Head of caudate nucleus (tissue), 42 donors: ENCODE measurements at regions of chr6 and their contacts with region 1.

Region 1: DNA sequence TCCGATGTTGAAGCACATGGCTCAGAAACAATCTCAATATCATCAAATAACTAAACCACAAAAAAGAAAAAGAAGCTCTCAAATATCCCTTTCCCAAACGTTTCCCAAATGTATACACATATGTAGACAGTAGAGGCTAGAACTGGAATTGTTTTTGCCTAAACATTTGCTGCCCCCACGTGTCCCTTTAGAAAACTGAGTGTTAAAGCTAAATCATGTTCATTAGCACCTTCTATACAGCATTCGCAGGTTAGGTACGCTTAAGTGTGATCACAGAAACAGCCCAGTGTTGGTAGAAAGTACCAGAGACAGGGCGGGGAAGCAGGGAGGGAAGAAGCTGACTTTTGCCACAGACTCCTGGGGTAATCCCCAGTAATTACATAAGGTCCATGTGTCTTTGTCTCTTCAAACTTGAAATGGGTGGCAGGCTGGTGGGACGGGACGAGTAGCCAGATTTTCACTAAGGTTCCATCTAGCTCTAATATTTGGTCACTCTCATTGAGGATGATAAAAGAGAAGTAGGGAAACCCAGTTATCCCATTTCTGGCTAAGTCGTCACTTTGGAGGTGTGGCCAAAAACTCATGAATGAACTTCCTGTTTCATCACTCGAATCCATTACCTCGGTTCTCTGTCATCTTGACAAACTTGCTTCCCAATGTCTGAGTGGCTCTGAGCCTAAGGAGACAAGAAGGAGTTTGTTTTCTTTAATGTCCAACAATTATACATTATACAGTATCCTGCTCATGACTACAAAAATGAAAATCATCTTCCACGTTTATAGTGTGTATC is 15.0 kb upstream of the TFAP2A start:
- DNase-seq: peak in 19 of 42 donors; percentile 22 to 73 (median 55)

Region 2: GRCh38 chr6:9532571-9533557 is 897.0 kb before region 1 on chr6:
- intact Hi-C with region 1: loop called (anchors 10 kb)
- DNase-seq: no peak